Ovary (tissue), 10 donors: ENCODE measurements at regions of chr21 and their contacts with region 1.

Region 1: DNA sequence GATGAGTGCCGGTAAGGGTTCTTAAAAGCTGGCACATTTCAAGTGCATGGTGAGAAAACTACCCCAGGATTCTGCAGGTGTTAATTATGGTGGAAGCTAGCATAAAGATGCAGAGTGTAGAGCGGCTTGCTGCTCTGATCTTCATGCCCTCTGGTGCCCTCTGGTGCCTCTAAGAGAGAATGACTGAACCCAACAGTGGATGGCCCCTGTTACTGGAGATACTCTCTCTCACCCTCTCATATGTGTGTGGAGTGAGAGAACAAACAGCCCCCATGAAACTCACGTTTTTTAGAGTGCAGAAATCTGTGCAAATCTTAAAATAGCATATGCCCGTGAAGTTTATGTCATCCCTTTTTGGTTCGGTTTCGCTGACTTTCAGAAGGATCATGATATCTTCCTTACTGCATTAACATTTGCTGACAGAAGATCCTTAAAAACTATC is 90.0 kb downstream of the GRIK1 start:
- DNase-seq: peak; percentile 9 to 36 (median 27)
- H3K4me3 ChIP-seq: no peak overlapping the region
- H3K27ac ChIP-seq: no peak overlapping the region
- H3K4me1 ChIP-seq: no peaks in the 10 kb centered on the region
- H3K27me3 ChIP-seq: no peaks in the 10 kb centered on the region
- CTCF ChIP-seq: peak; percentile 14 to 31 (median 20)
- EP300 ChIP-seq: no peak
- POLR2A ChIP-seq: no peak

Region 2: GRCh38 chr21:29477941-29478340 is 371.8 kb before region 1 on chr21:
- intact Hi-C with region 1: loop called in 1 of 4 experiments (anchors 10 kb)
- DNase-seq: no peak
- H3K4me3 ChIP-seq: no peak overlapping the region
- H3K27ac ChIP-seq: no peak overlapping the region
- H3K4me1 ChIP-seq: peaks cover 4% of the 10 kb centered on the region
- H3K27me3 ChIP-seq: no peaks in the 10 kb centered on the region
- CTCF ChIP-seq: no peak
- EP300 ChIP-seq: no peak
- POLR2A ChIP-seq: no peak